ENCODE measurements at regions of chr19 and their contacts with region 1.

Region 1: DNA sequence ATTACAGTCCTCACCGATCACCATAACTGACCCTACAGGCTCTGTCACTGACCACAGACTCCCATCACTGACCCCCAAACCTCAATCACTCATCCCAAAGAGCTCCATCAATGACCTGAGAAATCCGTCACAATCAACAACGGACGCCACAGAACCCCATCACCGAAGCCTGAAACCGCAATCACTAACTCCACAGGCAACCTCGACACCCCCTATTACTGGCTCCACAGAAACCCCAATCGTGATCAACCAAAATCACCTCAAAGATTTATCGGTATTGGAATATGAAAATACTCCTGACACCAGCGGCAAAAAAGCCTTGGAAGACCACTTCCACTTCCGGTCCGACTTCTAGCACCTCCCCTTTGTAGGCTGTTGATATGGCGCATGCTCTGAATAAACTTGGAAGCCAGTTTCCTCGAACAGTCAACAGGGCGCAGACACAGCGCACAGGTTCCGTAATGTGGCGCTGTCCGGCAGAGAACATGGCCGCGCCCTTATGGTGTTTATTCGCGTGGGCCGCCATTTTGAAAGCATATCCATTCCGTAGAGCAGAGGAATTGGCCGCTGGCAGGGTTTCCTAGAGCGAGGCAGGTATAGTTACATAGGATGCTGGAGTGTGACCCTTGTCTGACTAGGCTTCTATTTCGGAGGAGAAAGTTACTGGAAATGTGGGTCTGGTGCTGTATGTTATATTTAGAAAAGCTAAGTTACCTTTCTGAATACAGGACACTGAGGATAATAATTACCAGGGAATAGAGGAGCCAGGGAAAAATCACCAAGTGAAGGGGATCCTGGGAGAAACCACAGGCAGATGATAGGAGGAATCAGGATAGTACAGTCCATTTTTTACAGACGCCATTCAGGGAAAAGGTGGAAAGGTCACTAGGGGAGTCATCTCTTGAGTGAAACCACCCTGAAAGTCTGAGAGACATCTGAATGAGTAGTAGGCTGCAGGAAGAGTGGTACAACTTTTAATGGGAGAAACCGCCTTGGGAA is at the start of gene ZNF585A:
- DNase-seq: peak; percentile 95
- total RNA-seq, gene ZNF585A: 12.2 TPM

Region 2: DNA sequence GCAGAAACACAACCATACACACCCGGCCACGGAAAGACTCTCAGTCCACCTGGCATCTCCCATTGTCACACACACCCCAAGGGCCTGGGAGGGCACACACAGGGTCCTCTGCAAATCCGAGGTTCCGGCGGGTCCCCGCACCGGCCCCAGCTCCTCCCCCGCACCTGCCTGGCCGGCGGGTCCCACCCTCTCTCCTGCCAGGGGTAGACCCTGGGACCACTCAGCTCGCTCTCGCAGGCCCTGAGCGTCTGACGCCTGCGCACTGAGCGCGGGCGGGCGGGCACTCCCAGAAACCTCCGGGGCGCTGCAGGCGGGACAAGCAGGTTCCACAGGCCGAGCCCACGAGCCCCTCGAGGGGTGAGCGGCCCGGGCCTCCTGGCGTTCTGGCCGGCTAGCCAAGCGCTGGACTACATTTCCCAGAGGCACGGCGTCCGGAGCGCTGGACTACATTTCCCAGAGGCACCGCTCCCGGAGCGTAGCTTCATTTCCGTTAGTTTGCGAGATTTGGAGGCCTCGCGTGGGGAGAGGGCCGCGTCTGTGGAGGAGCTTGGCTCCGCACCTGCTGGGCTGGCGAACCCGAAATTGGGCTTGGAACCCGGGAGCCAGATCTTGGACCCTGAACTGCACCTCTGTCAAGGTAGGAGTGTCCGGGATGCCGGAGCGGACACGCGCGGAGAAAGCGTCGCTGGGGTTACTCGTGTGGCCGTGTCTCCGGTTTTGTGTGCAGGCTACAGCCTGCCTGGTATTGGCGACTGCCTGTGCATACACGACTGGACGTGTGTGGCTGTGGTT is 94.5 kb before region 1 on chr19 and contains the start of gene ZNF420:
- intact Hi-C with region 1: loop called (anchors 5 kb)
- DNase-seq: peak; percentile 95
- total RNA-seq, gene ZNF420: 6.5 TPM

Region 3: DNA sequence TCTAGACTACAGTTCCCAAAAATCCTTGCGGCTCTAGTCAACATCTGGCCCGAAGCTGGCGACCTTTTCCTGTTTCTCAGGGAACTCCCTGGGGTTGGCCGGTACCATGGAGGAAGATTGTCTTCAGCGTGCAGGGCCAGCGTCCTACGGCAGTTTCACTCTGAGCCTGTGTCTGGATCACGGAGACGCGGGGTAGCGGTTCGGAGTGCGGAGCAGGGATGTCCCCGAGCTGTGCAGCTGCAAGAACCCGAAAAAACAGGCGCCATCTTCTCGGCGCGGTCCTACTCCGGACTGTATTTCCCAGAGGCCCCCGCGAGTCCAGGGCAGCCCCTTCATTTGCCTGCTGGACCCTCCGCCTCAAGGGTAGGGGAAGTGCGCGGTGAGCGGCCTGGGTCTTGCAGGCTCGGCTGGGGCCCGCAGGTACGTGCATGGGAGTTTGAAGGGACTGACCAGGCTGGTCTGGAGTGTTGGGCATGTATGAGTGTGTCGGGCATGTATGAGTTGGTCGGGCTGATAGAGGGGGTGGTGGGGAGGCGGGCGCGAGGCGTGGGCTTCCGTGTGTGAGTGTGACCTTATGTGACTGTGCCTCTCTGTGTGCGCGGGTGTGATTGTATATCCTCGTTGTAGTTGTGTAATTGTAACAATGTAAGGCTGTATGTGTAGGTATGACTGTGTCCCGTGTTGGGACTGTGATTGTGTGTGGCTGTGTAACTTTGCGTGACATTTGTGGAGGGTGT is 45.4 kb after region 1 on chr19 and contains the start of gene ZNF383:
- intact Hi-C with region 1: loop called (anchors 5 kb)
- DNase-seq: peak; percentile 92
- total RNA-seq, gene ZNF383: 9.2 TPM